ENCODE measurements at regions of chr15 and their contacts with region 1.

Region 1: DNA sequence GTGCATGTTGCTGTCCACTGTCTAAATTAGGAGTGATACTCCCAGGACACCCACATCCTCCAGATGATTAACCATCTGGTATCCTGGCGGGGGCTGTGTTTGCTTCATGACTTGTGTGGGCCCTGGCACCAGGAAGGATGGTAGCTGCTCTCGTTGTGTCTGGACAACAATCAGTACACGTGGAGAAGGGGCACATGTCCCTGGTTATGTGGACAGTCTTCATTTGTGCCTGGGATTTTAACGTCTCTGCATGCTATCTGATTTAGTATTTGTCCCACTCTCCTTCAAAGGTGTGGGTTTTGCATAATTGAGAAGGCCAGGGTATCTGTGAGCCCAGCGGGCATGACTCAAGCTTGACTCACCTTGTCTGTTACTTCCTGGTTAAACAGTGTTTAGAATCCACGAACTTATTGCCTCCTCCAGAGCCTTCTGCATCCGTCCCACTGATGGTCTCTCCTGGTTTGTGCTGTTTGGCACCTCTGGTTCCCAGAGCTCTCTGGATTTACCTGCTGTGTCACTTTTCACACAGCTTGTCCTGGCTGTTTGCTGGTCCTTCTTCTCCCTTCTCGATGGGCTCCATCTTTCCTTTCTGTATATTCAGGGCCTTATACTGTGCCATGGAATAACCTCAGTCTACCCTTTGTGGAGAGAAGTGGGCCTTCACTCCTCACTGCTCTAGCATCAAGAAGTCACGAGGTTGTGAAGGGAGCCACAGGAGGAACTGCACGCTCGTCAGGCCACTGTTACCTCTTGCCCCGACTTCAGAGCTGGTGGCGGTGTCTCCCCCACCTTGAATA is 32.5 kb downstream of the ARNT2 start:
- DNase-seq: peak; percentile 70
- ATAC-seq: peak; percentile 91
- H3K4me3 ChIP-seq: peak overlapping the region; percentile 10 to 46; a peak in 3 of 4 replicates
- H3K27ac ChIP-seq: peak overlapping the region; percentile 59
- H3K4me1 ChIP-seq: peaks cover 16 to 27% of the 10 kb centered on the region in 2 experiments
- H3K27me3 ChIP-seq: no peaks in the 10 kb centered on the region
- CTCF ChIP-seq: no peak
- POLR2A ChIP-seq: no peak
- RAD21 ChIP-seq: no peak

Region 2: DNA sequence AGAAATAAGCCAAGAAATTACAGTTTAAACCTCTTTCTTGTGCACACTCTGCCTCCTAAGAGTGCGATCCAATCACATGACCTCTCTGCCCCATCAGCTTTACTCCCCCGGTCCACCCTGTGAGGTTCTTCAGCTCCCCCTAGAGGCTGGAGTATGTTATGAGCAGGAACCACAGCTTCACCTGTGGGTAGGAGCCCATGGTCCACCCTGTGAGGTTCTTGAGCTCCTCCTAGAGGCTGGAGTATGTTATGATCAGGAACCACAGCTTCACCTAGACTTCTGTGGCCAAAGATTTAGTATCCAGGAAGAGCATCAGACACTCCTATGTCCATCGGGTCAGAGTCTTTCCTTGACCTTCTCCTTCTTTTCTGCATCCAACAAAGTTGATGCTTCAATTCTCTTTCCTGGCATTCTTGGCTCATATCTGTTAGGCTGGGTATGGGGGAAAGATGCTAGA is 840.6 kb before region 1 on chr15:
- CTCF ChIA-PET with region 1: no interaction called
- POLR2A ChIA-PET with region 1: no interaction called
- RAD21 ChIA-PET with region 1: no interaction called
- intact Hi-C with region 1: no loop called
- DNase-seq: peak; percentile 95
- ATAC-seq: peak; percentile 99
- H3K4me3 ChIP-seq: no peak overlapping the region
- H3K27ac ChIP-seq: no peak overlapping the region
- H3K4me1 ChIP-seq: no peaks in the 10 kb centered on the region
- H3K27me3 ChIP-seq: peaks cover 14% of the 10 kb centered on the region
- CTCF ChIP-seq: peak; percentile 99 to 100 (median 99)
- POLR2A ChIP-seq: no peak
- RAD21 ChIP-seq: peak; percentile 89

Region 3: DNA sequence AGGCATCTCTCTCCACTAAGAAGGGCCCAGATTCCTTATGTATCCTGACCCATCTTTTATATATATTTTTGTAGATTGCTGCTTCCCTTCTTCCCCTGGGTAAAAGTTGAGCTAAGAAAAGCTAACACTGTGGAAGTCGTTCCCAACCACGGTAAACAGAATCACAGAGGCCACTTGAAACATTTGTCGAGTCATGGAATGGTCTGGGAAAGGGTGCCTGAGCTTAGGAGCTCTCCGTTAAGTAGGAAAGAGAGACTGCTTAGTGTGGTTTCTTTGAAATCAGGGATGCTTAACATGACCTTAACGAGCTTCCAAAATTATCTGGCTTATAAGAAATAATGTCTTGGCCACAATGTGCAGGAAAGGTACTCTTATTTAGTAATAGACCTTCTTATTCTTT is 13.1 kb after region 1 on chr15:
- CTCF ChIA-PET with region 1: no interaction called
- POLR2A ChIA-PET with region 1: no interaction called
- RAD21 ChIA-PET with region 1: no interaction called
- intact Hi-C with region 1: loop called (anchors 1 kb)
- DNase-seq: no peak
- ATAC-seq: no peak
- H3K4me3 ChIP-seq: no peak overlapping the region
- H3K27ac ChIP-seq: no peak overlapping the region
- H3K4me1 ChIP-seq: no peaks in the 10 kb centered on the region
- H3K27me3 ChIP-seq: no peaks in the 10 kb centered on the region
- CTCF ChIP-seq: no peak
- POLR2A ChIP-seq: no peak
- RAD21 ChIP-seq: no peak

Measured in HCT116 (cell line).